Thyroid gland (tissue), 4 donors: ENCODE measurements at regions of chr7 and their contacts with region 1.

Region 1: GRCh38 chr7:123494193-123494796 is 40.1 kb downstream of the IQUB start:
- DNase-seq: peak in 1 of 2 donors; percentile 16
- H3K4me3 ChIP-seq: no peak overlapping the region
- H3K27ac ChIP-seq: no peak overlapping the region
- H3K4me1 ChIP-seq: no peaks in the 10 kb centered on the region
- H3K27me3 ChIP-seq: no peaks in the 10 kb centered on the region
- CTCF ChIP-seq: peak in 5 of 6 experiments; percentile 46 to 85 (median 66)
- POLR2A ChIP-seq: no peak

Region 2: GRCh38 chr7:123327661-123328060 is 166.6 kb before region 1 on chr7:
- intact Hi-C with region 1: no loop called
- DNase-seq: no peak
- H3K4me3 ChIP-seq: no peak overlapping the region
- H3K27ac ChIP-seq: no peak overlapping the region
- H3K4me1 ChIP-seq: no peaks in the 10 kb centered on the region
- H3K27me3 ChIP-seq: no peaks in the 10 kb centered on the region
- CTCF ChIP-seq: no peak
- POLR2A ChIP-seq: no peak

Region 3: DNA sequence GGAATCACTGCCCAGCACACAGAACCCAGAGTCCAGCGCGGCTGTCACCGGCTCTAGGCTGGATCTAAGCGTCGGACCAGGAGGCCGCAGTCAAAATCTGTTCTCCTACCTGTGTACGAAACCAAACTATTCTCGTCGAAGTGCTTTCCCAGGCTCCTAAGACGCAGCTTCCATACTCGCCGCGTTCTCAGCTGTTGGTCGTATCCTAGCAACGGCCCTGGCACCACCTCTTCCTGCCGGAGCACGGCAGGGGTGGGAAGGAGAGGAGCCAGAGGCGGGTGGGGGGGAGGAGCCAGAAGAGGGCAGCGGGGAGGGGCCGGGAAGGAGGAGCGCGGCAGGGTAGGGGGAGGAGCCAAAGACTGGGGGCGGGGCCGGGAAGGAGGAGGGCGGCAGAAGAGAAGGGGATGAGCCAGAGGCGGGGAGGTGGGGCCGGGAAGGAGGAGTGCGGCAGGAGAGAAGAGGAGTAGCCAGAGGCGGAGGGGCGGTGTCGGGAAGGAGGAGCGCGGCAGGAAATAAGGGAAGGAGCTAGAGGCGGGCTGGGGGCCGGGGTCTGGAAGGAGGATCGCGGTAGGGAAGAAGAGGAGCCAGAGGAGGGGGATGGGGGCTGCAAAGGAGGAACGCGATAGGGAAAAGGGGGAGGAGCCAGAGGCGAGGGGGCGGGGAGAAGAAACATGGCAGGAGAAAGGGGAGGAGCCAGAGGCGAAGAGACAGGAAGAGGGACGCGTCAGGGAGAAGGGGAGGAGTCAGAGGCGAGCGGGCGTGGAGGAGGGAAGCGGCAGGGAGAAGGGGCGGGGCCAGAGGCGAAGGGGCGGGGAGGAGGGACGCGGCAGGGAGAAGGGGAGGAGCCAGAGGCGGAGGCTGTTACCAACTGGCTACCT is 40.3 kb after region 1 on chr7 and contains the start of gene IQUB:
- intact Hi-C with region 1: loop called (anchors 5 kb)
- DNase-seq: peak; percentile 98 to 99
- H3K4me3 ChIP-seq: peak within 1 kb of the TSS in 2 of 3 donors; percentile 45 to 61
- H3K27ac ChIP-seq: peak within 1 kb of the TSS; percentile 88 to 97 (median 88)
- H3K4me1 ChIP-seq: no peaks in the 10 kb centered on the region
- H3K27me3 ChIP-seq: no peaks in the 10 kb centered on the region
- CTCF ChIP-seq: no peak
- POLR2A ChIP-seq: peak in 1 of 2 donors; percentile 88
- total RNA-seq, gene IQUB: 5.4 to 11.7 (median 11.5) TPM

Region 4: DNA sequence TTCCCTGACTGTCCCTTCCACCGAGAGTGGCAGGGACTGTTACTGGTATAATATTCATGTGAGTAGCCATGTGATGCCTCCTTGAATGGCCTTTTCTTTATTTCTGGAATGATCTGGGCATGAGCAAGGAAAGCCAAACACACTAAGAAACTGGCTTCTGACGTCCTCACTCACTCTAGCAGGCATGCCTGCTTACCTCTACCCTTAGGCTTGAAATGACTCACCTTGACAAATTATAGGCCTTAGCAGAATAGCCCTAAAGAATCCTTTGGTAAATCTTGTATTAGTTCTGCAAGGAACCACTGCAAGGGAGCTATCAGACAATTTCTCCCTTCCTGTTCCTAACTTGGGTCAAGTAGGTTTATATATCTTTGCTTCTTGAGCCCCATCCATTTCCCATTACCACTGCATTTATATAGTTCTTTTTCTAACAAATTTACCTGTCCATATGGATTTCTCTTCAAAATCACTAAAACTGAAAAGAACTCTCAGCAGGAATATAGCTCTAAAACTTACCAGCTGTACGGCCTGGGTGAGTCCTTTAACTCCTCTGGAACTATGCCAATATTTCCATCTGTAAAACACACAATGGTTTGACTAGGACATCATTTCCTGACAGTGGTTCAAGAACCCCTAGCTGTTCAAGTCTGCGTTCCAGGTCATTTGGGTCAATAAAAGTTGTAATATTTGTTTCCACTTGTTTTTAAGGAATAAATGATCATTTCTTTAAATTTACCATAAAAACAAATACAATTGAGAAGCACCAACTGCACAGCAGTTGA is 76.3 kb after region 1 on chr7:
- intact Hi-C with region 1: no loop called
- DNase-seq: no peak
- H3K4me3 ChIP-seq: no peak overlapping the region
- H3K27ac ChIP-seq: no peak overlapping the region
- H3K4me1 ChIP-seq: no peaks in the 10 kb centered on the region
- H3K27me3 ChIP-seq: no peaks in the 10 kb centered on the region
- CTCF ChIP-seq: no peak
- POLR2A ChIP-seq: no peak